ENCODE measurements at regions of chr3 and their contacts with region 1.

Region 1: GRCh38 chr3:150408221-150409102 is at the start of gene TSC22D2:
- DNase-seq: peak; percentile 79 to 97
- H3K4me3 ChIP-seq: peak within 1 kb of the TSS; percentile 69
- H3K27ac ChIP-seq: peak within 1 kb of the TSS; percentile 97
- H3K4me1 ChIP-seq: peaks cover 17% of the 10 kb centered on the region
- H3K27me3 ChIP-seq: no peaks in the 10 kb centered on the region
- CTCF ChIP-seq: 0 out of 2 replicates have a peak, but pooled peaks have one; percentile 18
- total RNA-seq, gene TSC22D2: 20.5 and 32.0 TPM in 2 replicates

Region 2: DNA sequence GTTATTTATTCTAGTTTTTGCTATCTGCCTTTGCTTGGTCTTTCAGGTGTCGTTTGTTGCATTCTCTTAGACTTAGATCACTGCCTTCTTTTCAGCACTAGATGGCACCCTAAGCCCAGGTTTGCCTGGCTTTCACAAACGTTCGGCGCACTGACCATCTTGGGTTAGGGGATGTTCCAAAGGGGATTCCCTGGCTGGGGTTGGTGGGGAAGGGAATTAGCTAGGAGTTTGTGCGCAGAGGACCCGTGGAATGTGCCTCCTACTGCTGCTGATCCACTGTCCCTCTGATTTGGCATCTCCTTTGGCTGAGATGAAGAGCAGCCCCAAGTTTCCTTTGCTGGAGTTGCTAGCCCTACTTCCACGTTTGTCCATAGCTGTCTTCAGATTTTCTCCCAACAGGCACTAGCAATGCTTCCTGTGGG is 471.6 kb before region 1 on chr3:
- CTCF ChIA-PET with region 1: no interaction called
- POLR2A ChIA-PET with region 1: no interaction called
- intact Hi-C with region 1: loop called (anchors 10 kb)
- DNase-seq: peak in 1 of 2 experiments; percentile 44
- H3K4me3 ChIP-seq: no peak overlapping the region
- H3K27ac ChIP-seq: no peak overlapping the region
- H3K4me1 ChIP-seq: no peaks in the 10 kb centered on the region
- H3K27me3 ChIP-seq: no peaks in the 10 kb centered on the region
- CTCF ChIP-seq: peak; percentile 76

Region 3: DNA sequence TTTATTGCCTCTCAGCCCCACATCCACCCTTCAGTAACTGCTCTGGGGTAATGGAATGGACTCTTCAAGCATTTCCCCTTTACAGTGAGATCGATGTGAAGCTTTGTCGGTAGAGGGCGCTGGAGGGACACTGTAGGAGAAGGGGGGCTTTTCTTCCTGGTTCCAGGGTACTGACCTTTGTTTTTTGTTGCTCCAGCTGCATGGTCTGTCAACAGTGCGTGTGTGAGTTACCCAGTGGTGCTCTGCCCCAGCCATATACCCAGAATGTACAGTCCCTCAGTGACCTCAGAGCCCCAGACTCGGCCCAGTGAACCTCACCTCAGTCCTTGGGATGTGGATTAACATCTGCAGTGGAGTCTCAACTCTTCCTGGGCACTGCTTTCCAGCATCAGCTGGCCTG is 180.6 kb before region 1 on chr3:
- CTCF ChIA-PET with region 1: interaction called, 10 read pairs
- POLR2A ChIA-PET with region 1: interaction called, 5 read pairs
- intact Hi-C with region 1: loop called (anchors 2 kb)
- DNase-seq: peak in 1 of 2 experiments; percentile 65
- H3K4me3 ChIP-seq: no peak overlapping the region
- H3K27ac ChIP-seq: no peak overlapping the region
- H3K4me1 ChIP-seq: no peaks in the 10 kb centered on the region
- H3K27me3 ChIP-seq: no peaks in the 10 kb centered on the region
- CTCF ChIP-seq: peak; percentile 82

Region 4: DNA sequence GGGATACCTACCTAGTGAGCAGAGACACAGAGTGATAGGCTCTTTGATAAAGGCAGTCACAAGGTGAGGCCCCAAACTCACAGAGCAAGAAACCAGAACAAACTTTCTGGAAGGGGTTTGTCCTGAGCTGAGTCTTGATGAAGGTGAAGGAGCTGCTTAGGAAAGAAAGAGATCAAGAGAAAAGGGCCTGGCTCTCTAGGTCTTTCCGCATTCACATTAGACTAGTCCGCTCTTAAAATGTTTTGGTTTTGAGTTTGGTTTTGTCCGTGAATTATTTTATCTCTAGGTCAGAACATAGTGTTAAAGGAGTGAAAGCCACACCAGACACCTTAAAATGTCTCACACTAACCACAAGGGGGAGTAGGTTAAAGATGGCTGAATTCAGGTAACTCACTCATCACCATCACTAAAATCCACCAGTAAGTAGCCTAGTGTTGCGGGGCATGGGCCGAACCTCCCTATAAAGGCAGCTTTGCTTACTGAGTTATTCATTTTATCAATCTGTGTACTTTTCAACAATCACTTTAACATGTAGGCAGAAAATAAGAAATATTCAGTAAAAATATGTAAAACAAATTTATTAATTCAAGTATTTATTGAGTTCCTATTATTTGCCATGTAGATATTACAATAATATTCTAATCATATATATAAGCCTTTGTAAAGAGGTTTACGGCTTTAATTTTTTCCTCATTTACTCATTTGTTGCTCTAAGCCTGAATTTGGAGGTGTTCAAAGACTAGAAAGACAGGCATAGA is 121.9 kb before region 1 on chr3:
- CTCF ChIA-PET with region 1: interaction called, 3 read pairs
- POLR2A ChIA-PET with region 1: no interaction called
- intact Hi-C with region 1: loop called (anchors 1 kb)
- DNase-seq: peak; percentile 25 to 42
- H3K4me3 ChIP-seq: no peak overlapping the region
- H3K27ac ChIP-seq: peak overlapping the region; percentile 4; the same call in 1 of the 2 replicates
- H3K4me1 ChIP-seq: peaks cover 11% of the 10 kb centered on the region; the same call in 1 of the 2 replicates
- H3K27me3 ChIP-seq: no peaks in the 10 kb centered on the region
- CTCF ChIP-seq: peak; percentile 79

Region 5: DNA sequence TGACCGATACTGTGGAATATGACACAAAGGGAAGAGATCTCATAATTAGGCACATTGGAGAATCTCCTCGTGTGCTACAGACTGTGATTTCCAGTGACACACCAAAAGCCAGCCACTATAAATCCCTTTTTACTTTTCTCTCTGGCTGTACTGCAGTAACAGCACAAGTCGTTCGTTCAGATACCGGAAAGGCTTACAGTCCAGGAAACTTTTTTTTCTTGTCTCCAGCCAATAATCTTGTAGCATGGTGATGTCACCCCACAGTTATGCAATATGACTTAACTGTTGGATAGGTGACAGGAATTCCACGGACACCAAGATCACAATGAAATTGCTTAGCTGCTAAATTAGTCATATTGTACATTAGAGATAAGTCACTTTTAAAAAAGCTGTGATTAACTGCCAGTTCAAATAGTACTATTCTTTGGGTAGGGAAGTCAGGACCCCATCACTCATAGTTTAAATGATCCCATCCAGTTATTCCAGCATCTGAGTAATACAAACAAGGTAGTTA is 36.7 kb before region 1 on chr3:
- CTCF ChIA-PET with region 1: no interaction called
- POLR2A ChIA-PET with region 1: interaction called, 4 read pairs
- intact Hi-C with region 1: loop called (anchors 1 kb)
- DNase-seq: peak; percentile 77 to 99
- H3K4me3 ChIP-seq: peak overlapping the region; percentile 53; the same call in 1 of the 2 replicates
- H3K27ac ChIP-seq: peak overlapping the region; percentile 92
- H3K4me1 ChIP-seq: peaks cover 63% of the 10 kb centered on the region
- H3K27me3 ChIP-seq: no peaks in the 10 kb centered on the region
- CTCF ChIP-seq: no peak

Region 6: GRCh38 chr3:150469031-150469942 is 60.8 kb after region 1 on chr3:
- CTCF ChIA-PET with region 1: interaction called, 6 read pairs
- POLR2A ChIA-PET with region 1: interaction called, 6 read pairs
- intact Hi-C with region 1: loop called (anchors 1 kb)
- DNase-seq: peak; percentile 76 to 97
- H3K4me3 ChIP-seq: peak overlapping the region; percentile 38; the same call in 1 of the 2 replicates
- H3K27ac ChIP-seq: peak overlapping the region; percentile 89
- H3K4me1 ChIP-seq: peaks cover 53% of the 10 kb centered on the region
- H3K27me3 ChIP-seq: no peaks in the 10 kb centered on the region
- CTCF ChIP-seq: no peak

Region 7: DNA sequence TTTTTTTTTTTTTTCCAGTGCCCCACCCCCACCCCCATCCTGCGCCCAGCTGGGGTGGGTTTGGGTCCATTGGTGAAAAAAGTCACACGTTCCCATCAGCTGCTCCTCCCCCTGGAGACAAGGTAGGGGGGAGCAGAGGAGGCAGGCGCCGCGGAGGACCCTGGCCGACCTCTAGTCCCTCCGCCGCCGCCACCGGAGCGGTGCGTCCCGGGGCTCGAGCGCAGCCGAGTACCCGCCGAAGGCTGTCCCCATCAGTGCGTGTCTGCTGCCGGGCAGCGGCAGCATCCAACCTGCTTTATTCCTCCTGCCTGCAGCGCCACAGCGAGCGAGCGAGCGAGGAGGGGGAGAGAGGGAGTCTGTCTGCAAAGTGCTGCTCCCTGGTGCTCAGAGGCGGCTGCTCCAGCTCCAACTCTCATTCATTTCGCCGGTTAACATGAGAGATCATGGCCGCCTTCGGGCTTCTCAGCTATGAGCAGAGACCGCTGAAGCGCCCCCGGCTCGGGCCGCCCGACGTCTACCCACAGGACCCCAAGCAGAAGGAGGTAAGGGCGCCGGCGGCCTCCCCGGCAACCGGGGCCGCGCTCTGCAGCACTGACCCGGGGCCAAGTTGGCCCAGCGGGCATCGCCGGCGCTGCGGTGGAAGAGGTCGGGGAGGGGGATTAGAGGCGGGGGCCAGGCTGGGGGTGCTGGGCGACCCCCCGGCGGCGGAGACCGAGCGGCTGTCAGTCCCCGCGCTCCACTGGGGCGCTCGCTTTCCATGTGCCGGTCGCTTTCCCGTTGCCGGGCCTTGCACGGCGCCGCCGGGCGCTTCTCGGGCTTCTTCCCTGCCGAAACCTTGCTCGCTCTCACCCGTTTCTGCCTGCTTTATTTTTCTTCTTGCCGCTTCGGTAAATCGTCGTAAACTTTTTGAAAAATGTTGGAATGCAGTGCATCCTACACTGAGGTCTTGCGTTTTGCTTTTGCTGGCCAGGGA is 678.3 kb after region 1 on chr3:
- CTCF ChIA-PET with region 1: no interaction called
- POLR2A ChIA-PET with region 1: no interaction called
- intact Hi-C with region 1: no loop called
- DNase-seq: peak; percentile 62 to 73
- H3K4me3 ChIP-seq: peak overlapping the region; percentile 74
- H3K27ac ChIP-seq: no peak overlapping the region
- H3K4me1 ChIP-seq: no peaks in the 10 kb centered on the region
- H3K27me3 ChIP-seq: no peaks in the 10 kb centered on the region
- CTCF ChIP-seq: 0 out of 2 replicates have a peak, but pooled peaks have one; percentile 28

Measured in PC-9 (cell line).